CD8-positive, alpha-beta T cell (primary cell): ENCODE measurements at regions of chr1 and their contacts with region 1.

Region 1: DNA sequence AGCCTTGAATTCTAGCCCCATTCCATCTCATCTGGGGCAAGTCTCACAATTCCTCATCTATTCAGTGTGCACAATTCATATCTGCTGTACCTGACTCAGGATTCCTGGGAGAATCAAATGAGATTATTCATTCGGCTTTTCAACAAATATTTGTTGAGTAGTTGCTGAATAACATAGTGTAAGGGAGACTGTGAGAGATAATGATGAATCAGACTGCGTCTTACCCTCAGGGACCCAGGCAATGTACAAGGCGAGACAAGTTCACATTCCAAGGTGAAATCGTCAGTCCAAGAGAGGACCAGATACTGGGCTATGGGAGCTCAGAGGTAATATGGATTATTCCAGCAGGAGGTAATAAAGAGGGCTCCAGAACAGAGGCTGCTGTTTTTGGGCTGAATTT is 67.8 kb upstream of the SMYD2 start:
- DNase-seq: no peak
- ATAC-seq: no peak
- H3K4me3 ChIP-seq: no peak overlapping the region
- H3K4me3 Mint-ChIP-seq: no peak overlapping the region
- H3K27ac ChIP-seq: no peak overlapping the region
- H3K27ac Mint-ChIP-seq: no peak overlapping the region
- H3K4me1 ChIP-seq: no peaks in the 10 kb centered on the region
- H3K4me1 Mint-ChIP-seq: peaks cover 3% of the 10 kb centered on the region
- H3K27me3 ChIP-seq: no peaks in the 10 kb centered on the region
- H3K27me3 Mint-ChIP-seq: peaks cover 18% of the 10 kb centered on the region
- CTCF ChIP-seq: no peak

Region 2: DNA sequence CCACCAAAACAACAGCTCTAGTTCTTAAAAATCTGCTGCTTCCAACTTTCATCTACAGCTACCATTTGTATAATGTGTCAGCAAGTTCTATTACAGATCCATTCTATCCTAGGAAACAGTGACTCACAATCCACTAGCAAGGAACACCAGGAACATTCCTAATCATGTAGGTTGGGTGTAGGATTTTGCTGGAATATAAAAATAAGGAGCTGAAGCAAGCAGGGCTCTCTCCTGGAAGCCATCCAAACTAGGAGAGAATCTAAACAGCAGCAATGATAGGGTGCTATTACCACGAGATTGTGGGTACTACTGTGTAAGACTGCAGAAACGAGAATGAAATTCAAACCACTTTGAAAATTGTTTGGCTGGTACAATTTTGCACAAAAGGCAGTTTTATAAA is 203.3 kb after region 1 on chr1:
- CTCF ChIA-PET with region 1: no interaction called
- POLR2A ChIA-PET with region 1: no interaction called
- intact Hi-C with region 1: no loop called
- DNase-seq: no peak
- ATAC-seq: no peak
- H3K4me3 ChIP-seq: no peak overlapping the region
- H3K4me3 Mint-ChIP-seq: no peak overlapping the region
- H3K27ac ChIP-seq: no peak overlapping the region
- H3K27ac Mint-ChIP-seq: no peak overlapping the region
- H3K4me1 ChIP-seq: no peaks in the 10 kb centered on the region
- H3K4me1 Mint-ChIP-seq: peaks cover 2% of the 10 kb centered on the region
- H3K27me3 ChIP-seq: no peaks in the 10 kb centered on the region
- H3K27me3 Mint-ChIP-seq: peaks cover 2% of the 10 kb centered on the region
- CTCF ChIP-seq: no peak

Region 3: GRCh38 chr1:215526553-215527151 is 1313.5 kb after region 1 on chr1:
- CTCF ChIA-PET with region 1: no interaction called
- POLR2A ChIA-PET with region 1: no interaction called
- intact Hi-C with region 1: loop called (anchors 1 to 5 kb)
- DNase-seq: peak in 2 of 9 experiments; percentile 37 to 55
- ATAC-seq: no peak
- H3K4me3 ChIP-seq: no peak overlapping the region
- H3K4me3 Mint-ChIP-seq: no peak overlapping the region
- H3K27ac ChIP-seq: no peak overlapping the region
- H3K27ac Mint-ChIP-seq: no peak overlapping the region
- H3K4me1 ChIP-seq: no peaks in the 10 kb centered on the region
- H3K4me1 Mint-ChIP-seq: no peaks in the 10 kb centered on the region
- H3K27me3 ChIP-seq: no peaks in the 10 kb centered on the region
- H3K27me3 Mint-ChIP-seq: peaks cover 9% of the 10 kb centered on the region
- CTCF ChIP-seq: peak; percentile 87